ENCODE measurements at regions of chr14 and their contacts with region 1.

Region 1: GRCh38 chr14:74932401-74932901 is 9.4 kb upstream of the RPS6KL1 start:
- DNase-seq: no peak
- H3K4me3 ChIP-seq: no peak overlapping the region
- H3K27ac ChIP-seq: no peak overlapping the region
- H3K4me1 ChIP-seq: no peaks in the 10 kb centered on the region
- H3K27me3 ChIP-seq: no peaks in the 10 kb centered on the region
- CTCF ChIP-seq: no peak

Region 2: GRCh38 chr14:74867673-74868072 is 64.8 kb before region 1 on chr14:
- CTCF ChIA-PET with region 1: no interaction called
- dilution Hi-C with region 1: no loop called
- in situ Hi-C with region 1: no loop called
- intact Hi-C with region 1: no loop called
- DNase-seq: no peak
- H3K4me3 ChIP-seq: no peak overlapping the region
- H3K27ac ChIP-seq: no peak overlapping the region
- H3K4me1 ChIP-seq: no peaks in the 10 kb centered on the region
- H3K27me3 ChIP-seq: no peaks in the 10 kb centered on the region
- CTCF ChIP-seq: no peak

Region 3: DNA sequence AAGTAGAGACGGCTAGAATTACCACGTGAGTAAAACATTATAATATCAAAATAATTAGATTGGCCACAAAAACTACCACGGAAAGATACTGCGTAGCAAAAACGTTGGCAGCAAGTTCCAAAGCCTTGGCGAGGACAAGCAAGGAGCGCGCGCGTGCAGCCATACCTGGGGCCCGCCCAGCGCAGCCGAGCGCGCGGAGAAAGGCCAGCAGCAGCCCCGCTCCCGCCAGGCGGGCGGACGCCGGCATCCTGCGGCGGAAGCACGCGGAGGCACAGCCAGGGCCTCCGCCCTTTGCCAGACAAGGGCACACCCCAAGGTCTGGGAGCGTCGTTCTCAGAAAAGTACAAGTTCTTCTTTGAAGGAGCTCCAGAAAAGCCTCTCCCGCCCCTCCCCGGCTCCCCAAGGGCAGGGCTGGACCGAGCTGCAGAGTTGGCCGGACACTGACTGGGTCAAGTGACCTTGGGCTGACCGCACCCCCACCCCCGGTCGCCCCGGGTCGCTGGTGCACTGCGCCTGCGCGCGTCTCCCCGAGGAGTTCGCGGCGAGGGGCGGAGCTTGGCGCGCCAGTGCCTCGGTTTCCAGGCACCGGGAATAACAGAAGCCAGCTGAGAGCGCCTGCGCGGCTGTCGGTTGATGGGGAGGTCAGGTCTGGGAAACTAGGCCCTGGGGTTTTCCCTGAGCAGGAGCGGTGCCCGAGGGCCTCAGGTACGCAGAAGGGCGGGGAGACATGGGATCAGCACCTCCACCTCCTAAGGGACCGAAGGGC is 136.8 kb after region 1 on chr14 and contains the start of gene ZC2HC1C:
- CTCF ChIA-PET with region 1: no interaction called
- dilution Hi-C with region 1: no loop called
- in situ Hi-C with region 1: loop called in 1 of 2 experiments (anchors 10 kb)
- intact Hi-C with region 1: no loop called
- DNase-seq: peak; percentile 78
- H3K4me3 ChIP-seq: peak within 1 kb of the TSS; percentile 50 to 64 (median 56)
- H3K27ac ChIP-seq: peak within 1 kb of the TSS; percentile 75
- H3K4me1 ChIP-seq: peaks cover 22% of the 10 kb centered on the region
- H3K27me3 ChIP-seq: no peaks in the 10 kb centered on the region
- CTCF ChIP-seq: no peak
- total RNA-seq, gene ZC2HC1C: 0.17 to 0.89 TPM

Region 4: GRCh38 chr14:75147423-75148071 is 215.1 kb after region 1 on chr14:
- CTCF ChIA-PET with region 1: no interaction called
- dilution Hi-C with region 1: no loop called
- in situ Hi-C with region 1: no loop called
- intact Hi-C with region 1: no loop called
- DNase-seq: peak; percentile 95
- H3K4me3 ChIP-seq: no peak overlapping the region
- H3K27ac ChIP-seq: peak overlapping the region; percentile 75
- H3K4me1 ChIP-seq: peaks cover 23% of the 10 kb centered on the region
- H3K27me3 ChIP-seq: no peaks in the 10 kb centered on the region
- CTCF ChIP-seq: peak; percentile 64 to 72